Activated CD4-positive, alpha-beta T cell treated with anti-CD3 and anti-CD28 coated beads, Interleukin-2, amount 10 ng/mL, durations not matched to agents 24 days and 14 days (primary cell): ENCODE measurements at regions of chr6 and their contacts with region 1.

Region 1: DNA sequence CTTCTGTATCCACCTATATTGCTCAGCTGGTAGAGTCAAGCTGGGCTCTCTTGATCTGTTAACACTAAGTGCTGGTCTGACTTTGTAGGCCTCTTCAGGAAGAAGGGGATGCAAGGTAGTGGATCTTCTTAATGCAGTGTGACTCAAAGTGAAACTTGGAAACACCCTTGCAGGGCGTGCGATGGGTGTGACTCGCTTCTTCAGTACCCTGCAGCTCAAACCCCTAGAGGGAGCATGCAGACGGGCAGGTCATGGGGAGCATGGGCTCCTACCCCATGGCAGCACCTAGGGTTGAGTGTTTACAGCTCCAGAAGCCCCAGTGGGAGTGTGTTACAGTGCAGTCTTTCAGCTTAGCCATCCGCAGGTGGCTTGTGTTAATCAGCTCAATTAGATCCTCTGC is 757 bp upstream of the SAMD3 start:
- DNase-seq: peak; percentile 91
- H3K4me3 Mint-ChIP-seq: peak overlapping the region; percentile 73
- H3K27ac Mint-ChIP-seq: peak overlapping the region; percentile 64
- H3K4me1 Mint-ChIP-seq: peaks cover 23% of the 10 kb centered on the region
- H3K27me3 Mint-ChIP-seq: no peaks in the 10 kb centered on the region

Region 2: DNA sequence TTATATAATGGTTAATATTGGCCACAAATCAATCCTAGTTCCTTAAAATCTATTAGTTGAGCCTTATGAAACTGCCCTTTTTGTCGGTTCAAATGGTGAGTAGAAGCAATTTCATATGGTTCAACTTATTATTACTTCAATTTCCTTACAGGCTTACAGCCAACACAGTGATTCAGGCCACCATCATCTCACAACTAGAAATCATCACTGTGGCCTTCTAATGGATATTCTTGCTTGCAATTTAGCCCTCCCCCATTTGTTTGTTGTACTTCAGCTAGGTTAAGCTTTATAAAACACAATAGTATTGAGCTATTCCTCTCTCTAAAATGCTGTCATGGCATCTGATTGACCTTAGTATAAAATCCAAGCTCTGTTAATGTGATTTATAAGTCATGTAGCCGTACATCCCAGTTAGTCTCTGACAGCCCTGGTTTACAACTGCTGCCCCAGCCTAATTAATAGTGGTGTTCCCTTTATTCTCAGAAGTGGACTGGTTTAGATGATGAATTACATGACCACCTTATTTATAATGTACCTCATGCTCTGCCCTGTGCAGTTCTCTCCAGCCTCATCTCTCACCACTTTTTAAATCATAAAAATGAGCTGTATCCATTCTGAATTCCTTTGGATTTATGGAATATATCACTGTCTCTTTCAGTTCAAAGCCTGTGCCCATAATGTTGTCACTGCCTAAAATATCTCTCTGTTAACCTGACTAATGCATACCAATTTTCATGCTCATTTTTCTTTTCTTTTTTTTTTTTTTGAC is 1303.9 kb before region 1 on chr6:
- intact Hi-C with region 1: no loop called
- DNase-seq: no peak
- H3K4me3 Mint-ChIP-seq: no peak overlapping the region
- H3K27ac Mint-ChIP-seq: no peak overlapping the region
- H3K4me1 Mint-ChIP-seq: no peaks in the 10 kb centered on the region
- H3K27me3 Mint-ChIP-seq: no peaks in the 10 kb centered on the region

Region 3: DNA sequence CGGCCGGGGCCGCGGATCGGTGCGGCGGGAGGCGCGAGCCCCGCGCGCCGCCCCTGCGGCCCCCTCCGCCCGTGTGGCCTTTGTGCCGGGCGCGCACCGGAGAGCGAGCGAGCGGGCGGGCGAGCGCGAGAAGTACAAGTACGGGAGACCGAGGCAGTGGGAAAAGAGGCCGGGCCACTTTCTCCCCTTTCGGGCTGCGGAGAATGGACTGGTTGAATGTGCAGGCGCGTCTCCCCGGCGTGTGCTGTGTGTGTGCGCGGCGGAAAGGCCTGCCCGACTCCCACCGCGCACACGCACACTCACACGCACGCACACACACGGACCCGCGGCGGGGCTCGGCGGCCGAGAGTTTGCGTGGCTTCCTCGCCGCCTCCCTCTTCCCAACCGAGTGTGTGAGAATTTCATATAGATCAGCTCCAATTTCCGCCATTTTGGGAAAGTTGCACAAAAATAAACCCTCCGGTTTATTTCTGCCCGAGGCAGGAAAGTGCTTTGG is 204.1 kb before region 1 on chr6:
- intact Hi-C with region 1: no loop called
- DNase-seq: peak; percentile 78
- H3K4me3 Mint-ChIP-seq: peak overlapping the region; percentile 89
- H3K27ac Mint-ChIP-seq: peak overlapping the region; percentile 85
- H3K4me1 Mint-ChIP-seq: peaks cover 15% of the 10 kb centered on the region
- H3K27me3 Mint-ChIP-seq: peaks cover 16% of the 10 kb centered on the region

Region 4: GRCh38 chr6:130132286-130132701 is 91.2 kb before region 1 on chr6:
- intact Hi-C with region 1: loop called (anchors 2 kb)
- DNase-seq: peak; percentile 92
- H3K4me3 Mint-ChIP-seq: peak overlapping the region; percentile 66
- H3K27ac Mint-ChIP-seq: peak overlapping the region; percentile 93
- H3K4me1 Mint-ChIP-seq: peaks cover 62% of the 10 kb centered on the region
- H3K27me3 Mint-ChIP-seq: no peaks in the 10 kb centered on the region

Region 5: GRCh38 chr6:130183271-130184222 is 40.0 kb before region 1 on chr6:
- intact Hi-C with region 1: loop called (anchors 2 kb)
- DNase-seq: peak; percentile 83
- H3K4me3 Mint-ChIP-seq: peak overlapping the region; percentile 83
- H3K27ac Mint-ChIP-seq: peak overlapping the region; percentile 90
- H3K4me1 Mint-ChIP-seq: peaks cover 36% of the 10 kb centered on the region
- H3K27me3 Mint-ChIP-seq: no peaks in the 10 kb centered on the region

Region 6: GRCh38 chr6:130293800-130294199 is 70.3 kb after region 1 on chr6:
- intact Hi-C with region 1: no loop called
- DNase-seq: peak; percentile 81
- H3K4me3 Mint-ChIP-seq: no peak overlapping the region
- H3K27ac Mint-ChIP-seq: no peak overlapping the region
- H3K4me1 Mint-ChIP-seq: peaks cover 2% of the 10 kb centered on the region
- H3K27me3 Mint-ChIP-seq: peaks cover 15% of the 10 kb centered on the region

Region 7: DNA sequence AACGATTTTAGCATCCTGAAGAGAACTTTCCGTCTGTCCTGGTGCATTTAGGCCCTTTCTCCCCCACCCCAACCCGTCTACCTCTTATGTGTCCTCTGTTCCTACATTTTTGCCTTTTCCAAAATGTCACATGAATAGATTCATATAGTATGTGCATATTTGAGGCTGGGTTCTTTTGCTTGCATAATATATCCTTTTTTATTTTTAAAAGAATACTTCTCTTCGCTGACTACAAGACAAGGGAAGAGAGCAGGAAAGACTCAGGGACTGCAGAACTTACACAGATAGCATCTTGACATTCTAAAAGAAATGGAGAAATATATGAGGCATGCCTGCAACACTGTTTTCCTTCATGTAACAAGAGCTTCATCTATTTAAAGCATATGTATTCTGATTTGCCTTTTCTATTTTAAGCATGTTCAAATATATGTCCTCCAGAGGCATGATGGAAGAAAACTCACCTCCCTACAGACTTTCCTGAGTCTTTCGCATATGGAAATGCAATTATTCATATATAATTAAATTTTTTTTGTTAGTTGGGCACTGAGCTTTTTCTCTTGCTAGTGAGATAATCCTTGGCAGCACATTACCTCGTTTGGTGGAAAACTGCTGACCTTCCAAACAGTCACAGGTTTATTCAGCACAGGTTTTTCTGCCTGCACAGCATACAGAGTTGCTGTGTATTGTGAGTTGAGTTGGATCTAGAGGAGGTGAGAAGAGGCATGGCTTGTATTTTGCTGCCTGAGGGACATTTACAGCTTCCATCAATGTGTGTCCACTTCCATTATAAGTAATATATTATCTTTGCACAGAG is 1081.7 kb after region 1 on chr6:
- intact Hi-C with region 1: no loop called
- DNase-seq: no peak
- H3K4me3 Mint-ChIP-seq: no peak overlapping the region
- H3K27ac Mint-ChIP-seq: no peak overlapping the region
- H3K4me1 Mint-ChIP-seq: no peaks in the 10 kb centered on the region
- H3K27me3 Mint-ChIP-seq: no peaks in the 10 kb centered on the region